Breast epithelium (tissue), 4 donors: ENCODE measurements at regions of chr9 and their contacts with region 1.

Region 1: GRCh38 chr9:127038531-127038930 is 83.9 kb downstream of the ANGPTL2 start:
- DNase-seq: no peak
- H3K4me3 ChIP-seq: no peak overlapping the region
- H3K27ac ChIP-seq: no peak overlapping the region
- H3K4me1 ChIP-seq: peaks cover 0 to 21% of the 10 kb centered on the region in 2 donors
- H3K27me3 ChIP-seq: no peaks in the 10 kb centered on the region
- CTCF ChIP-seq: no peak
- POLR2A ChIP-seq: no peak

Region 2: GRCh38 chr9:127053057-127053821 is 14.7 kb after region 1 on chr9:
- intact Hi-C with region 1: loop called (anchors 1 kb)
- DNase-seq: no peak
- H3K4me3 ChIP-seq: no peak overlapping the region
- H3K27ac ChIP-seq: peak overlapping the region; percentile 68 to 89
- H3K4me1 ChIP-seq: peaks cover 0 to 5% of the 10 kb centered on the region in 2 donors
- H3K27me3 ChIP-seq: no peaks in the 10 kb centered on the region
- CTCF ChIP-seq: no peak
- POLR2A ChIP-seq: no peak